Endothelial cell of umbilical vein (primary cell): ENCODE measurements at regions of chr3 and their contacts with region 1.

Region 1: GRCh38 chr3:180594631-180595558 is 7.1 kb upstream of the TTC14 start:
- DNase-seq: peak; percentile 55
- H3K4me3 ChIP-seq: no peak overlapping the region
- H3K27ac ChIP-seq: no peak overlapping the region
- H3K4me1 ChIP-seq: no peaks in the 10 kb centered on the region
- H3K27me3 ChIP-seq: peaks cover 0 to 2% of the 10 kb centered on the region in 2 experiments
- CTCF ChIP-seq: peak; percentile 13 to 28
- POLR2A ChIP-seq: no peak

Region 2: DNA sequence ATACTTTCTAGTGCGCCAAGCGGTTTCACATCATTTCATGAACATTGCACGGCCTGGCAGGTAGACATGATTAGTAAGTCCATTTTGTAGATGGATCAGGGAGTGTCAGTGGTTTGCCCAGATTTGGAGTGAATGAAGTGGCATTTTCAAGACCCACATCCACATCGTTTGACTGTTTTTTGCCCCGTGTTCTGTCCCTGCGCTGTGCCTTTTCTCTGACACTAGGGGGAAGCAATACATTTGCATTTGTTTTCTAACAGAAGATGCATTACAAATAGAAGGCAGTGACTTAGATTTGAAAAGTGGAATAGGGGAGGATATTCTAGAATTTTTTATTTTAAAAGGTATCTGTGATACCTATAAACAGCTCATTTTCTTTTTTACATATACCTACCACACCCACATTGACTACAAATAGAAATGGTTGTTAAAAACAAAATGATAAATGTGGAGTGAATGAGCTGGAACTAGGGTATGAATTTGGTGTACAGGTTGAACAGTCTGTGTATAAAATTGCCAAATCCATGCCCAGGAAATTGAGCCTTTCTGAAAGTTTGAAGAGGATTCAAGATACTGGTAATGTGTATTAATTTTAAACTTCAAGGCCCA is 844.1 kb before region 1 on chr3:
- CTCF ChIA-PET with region 1: interaction called, 31 read pairs
- POLR2A ChIA-PET with region 1: no interaction called
- dilution Hi-C with region 1: no loop called
- intact Hi-C with region 1: no loop called
- DNase-seq: peak; percentile 43
- H3K4me3 ChIP-seq: no peak overlapping the region
- H3K27ac ChIP-seq: no peak overlapping the region
- H3K4me1 ChIP-seq: no peaks in the 10 kb centered on the region
- H3K27me3 ChIP-seq: no peaks in the 10 kb centered on the region
- CTCF ChIP-seq: peak; percentile 54 to 62
- POLR2A ChIP-seq: no peak

Region 3: DNA sequence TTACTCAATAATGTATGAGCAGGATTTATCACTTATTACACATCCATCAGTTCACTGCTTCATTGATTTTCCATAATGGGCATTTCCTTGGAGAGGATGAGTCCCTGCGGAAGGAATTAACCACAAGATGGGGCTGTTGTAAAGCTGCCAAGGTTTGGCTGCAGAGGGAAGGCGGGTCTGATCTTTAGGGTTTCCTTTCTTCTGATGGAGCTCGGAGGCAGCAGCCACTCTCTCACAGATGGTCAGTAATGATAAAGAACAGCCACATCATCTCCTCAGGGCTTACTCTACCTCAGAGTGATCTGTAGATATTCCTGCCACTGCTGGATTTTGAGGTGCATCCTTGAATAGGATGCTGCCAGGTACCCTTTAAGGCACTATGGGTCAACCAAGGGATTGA is 826.8 kb before region 1 on chr3:
- CTCF ChIA-PET with region 1: interaction called, 23 read pairs
- POLR2A ChIA-PET with region 1: no interaction called
- dilution Hi-C with region 1: no loop called
- intact Hi-C with region 1: loop called (anchors 5 kb)
- DNase-seq: peak; percentile 43
- H3K4me3 ChIP-seq: no peak overlapping the region
- H3K27ac ChIP-seq: no peak overlapping the region
- H3K4me1 ChIP-seq: peaks cover 16% of the 10 kb centered on the region
- H3K27me3 ChIP-seq: no peaks in the 10 kb centered on the region
- CTCF ChIP-seq: peak; percentile 37 to 38
- POLR2A ChIP-seq: no peak

Region 4: GRCh38 chr3:179949412-179949811 is 645.5 kb before region 1 on chr3:
- CTCF ChIA-PET with region 1: interaction called, 10 read pairs
- POLR2A ChIA-PET with region 1: no interaction called
- dilution Hi-C with region 1: no loop called
- intact Hi-C with region 1: no loop called
- DNase-seq: no peak
- H3K4me3 ChIP-seq: no peak overlapping the region
- H3K27ac ChIP-seq: no peak overlapping the region
- H3K4me1 ChIP-seq: no peaks in the 10 kb centered on the region
- H3K27me3 ChIP-seq: no peaks in the 10 kb centered on the region
- CTCF ChIP-seq: no peak
- POLR2A ChIP-seq: no peak

Region 5: GRCh38 chr3:180421221-180421620 is 173.7 kb before region 1 on chr3:
- CTCF ChIA-PET with region 1: no interaction called
- POLR2A ChIA-PET with region 1: no interaction called
- dilution Hi-C with region 1: no loop called
- intact Hi-C with region 1: no loop called
- DNase-seq: no peak
- H3K4me3 ChIP-seq: no peak overlapping the region
- H3K27ac ChIP-seq: no peak overlapping the region
- H3K4me1 ChIP-seq: peaks cover 4% of the 10 kb centered on the region
- H3K27me3 ChIP-seq: no peaks in the 10 kb centered on the region
- CTCF ChIP-seq: no peak
- POLR2A ChIP-seq: no peak